Prostate gland (tissue), 2 donors: ENCODE measurements at regions of chr4 and their contacts with region 1.

Region 1: DNA sequence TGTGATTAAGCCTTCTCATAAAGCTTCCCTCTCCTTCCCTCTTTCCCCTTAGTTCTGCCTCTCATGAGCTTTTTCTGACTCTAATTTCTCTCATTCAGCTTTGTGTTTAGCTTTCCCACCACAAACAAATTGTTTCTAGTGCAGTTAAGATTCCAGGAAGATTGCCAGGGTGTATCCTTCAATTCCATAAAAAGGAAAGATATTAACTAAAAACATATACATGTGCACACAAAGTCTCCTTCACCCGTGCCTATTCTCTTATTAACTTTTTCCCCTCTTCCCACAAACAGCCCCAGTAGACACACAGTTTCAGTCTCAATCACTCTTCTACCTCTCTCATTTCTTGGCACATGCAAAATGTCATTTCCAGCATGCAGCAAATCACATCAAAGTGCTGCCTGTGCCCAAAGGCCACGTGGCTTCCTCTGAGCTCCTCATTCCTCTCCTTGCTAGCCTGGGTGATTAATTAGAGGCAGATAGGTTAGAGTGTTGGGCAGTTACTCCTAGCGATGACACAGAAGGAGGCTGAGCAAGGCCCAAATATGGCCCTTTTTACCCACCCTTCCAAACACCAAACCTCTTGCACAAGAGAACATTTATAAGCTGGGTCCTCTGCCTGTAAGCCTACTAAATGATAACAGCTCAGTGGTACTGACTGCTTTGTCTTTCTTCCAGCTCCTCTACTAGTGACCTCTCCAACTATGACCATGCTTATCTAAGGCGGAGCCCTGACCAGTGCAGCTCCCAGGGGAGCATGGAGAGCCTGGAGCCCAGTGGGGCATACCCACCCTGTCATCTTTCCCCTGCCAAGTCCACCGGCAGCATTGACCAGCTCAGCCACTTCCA is 159.6 kb downstream of the SOWAHB start:
- DNase-seq: no peak
- H3K4me3 ChIP-seq: no peak overlapping the region
- H3K27ac ChIP-seq: peak overlapping the region; percentile 54 to 62
- H3K4me1 ChIP-seq: peaks cover under 1% of the 10 kb centered on the region
- H3K27me3 ChIP-seq: no peaks in the 10 kb centered on the region
- CTCF ChIP-seq: no peak
- POLR2A ChIP-seq: no peak

Region 2: GRCh38 chr4:76624241-76624681 is 114.0 kb before region 1 on chr4:
- intact Hi-C with region 1: loop called (anchors 5 kb)
- DNase-seq: no peak
- H3K4me3 ChIP-seq: no peak overlapping the region
- H3K27ac ChIP-seq: peak overlapping the region in 1 of 2 donors; percentile 74
- H3K4me1 ChIP-seq: peaks cover 9% of the 10 kb centered on the region
- H3K27me3 ChIP-seq: no peaks in the 10 kb centered on the region
- CTCF ChIP-seq: no peak
- POLR2A ChIP-seq: no peak

Region 3: GRCh38 chr4:76821641-76822040 is 83.3 kb after region 1 on chr4:
- intact Hi-C with region 1: no loop called
- DNase-seq: no peak
- H3K4me3 ChIP-seq: no peak overlapping the region
- H3K27ac ChIP-seq: no peak overlapping the region
- H3K4me1 ChIP-seq: no peaks in the 10 kb centered on the region
- H3K27me3 ChIP-seq: no peaks in the 10 kb centered on the region
- CTCF ChIP-seq: no peak
- POLR2A ChIP-seq: no peak